ENCODE measurements at regions of chr3 and their contacts with region 1.

Region 1: GRCh38 chr3:188052169-188053030 is 101.6 kb upstream of the LPP start:
- DNase-seq: peak; percentile 89 to 99 (median 94)

Region 2: DNA sequence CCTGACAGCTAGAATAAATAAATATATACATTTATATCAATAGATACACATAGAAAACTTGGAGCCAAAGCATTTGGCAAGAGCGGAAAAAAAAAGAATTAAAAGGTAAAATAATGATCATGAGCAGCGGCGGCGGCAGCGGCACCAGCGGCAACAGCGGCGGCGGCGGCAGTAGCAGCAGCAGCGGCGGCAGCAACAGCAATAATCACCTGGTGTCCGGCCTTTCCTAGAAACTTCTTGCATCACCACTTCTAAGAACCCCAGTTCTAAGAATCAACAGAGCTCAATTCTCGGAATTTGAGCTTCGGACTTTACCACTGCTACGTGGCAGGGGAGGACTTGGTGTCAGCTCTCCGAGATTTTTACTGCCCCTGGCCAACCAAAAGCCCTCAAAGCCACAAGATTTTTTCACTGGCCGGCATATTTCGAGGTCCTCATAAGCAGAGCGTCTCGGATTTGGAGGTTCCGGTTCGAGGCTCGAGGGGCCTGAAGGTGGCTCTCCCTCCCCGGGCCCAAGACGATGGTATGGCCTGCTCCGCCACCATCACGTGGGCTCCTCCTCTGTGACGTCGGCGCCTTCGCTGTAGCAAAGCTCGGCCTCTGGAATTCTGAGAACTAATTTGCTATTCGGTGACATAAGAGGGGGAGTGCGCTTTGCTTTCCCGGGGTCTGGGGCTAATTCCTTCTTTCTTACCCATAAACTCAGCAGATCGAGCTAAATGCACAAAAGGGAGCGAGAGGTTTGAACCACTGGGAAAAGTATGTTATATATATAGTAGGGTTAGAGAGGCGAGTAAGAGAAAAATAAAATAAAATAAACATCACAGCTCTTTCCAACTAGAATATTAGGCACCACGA is 307.0 kb before region 1 on chr3 and contains the start of gene BCL6:
- intact Hi-C with region 1: loop called (anchors 2 kb)
- DNase-seq: peak; percentile 86 to 98 (median 88)

Region 3: DNA sequence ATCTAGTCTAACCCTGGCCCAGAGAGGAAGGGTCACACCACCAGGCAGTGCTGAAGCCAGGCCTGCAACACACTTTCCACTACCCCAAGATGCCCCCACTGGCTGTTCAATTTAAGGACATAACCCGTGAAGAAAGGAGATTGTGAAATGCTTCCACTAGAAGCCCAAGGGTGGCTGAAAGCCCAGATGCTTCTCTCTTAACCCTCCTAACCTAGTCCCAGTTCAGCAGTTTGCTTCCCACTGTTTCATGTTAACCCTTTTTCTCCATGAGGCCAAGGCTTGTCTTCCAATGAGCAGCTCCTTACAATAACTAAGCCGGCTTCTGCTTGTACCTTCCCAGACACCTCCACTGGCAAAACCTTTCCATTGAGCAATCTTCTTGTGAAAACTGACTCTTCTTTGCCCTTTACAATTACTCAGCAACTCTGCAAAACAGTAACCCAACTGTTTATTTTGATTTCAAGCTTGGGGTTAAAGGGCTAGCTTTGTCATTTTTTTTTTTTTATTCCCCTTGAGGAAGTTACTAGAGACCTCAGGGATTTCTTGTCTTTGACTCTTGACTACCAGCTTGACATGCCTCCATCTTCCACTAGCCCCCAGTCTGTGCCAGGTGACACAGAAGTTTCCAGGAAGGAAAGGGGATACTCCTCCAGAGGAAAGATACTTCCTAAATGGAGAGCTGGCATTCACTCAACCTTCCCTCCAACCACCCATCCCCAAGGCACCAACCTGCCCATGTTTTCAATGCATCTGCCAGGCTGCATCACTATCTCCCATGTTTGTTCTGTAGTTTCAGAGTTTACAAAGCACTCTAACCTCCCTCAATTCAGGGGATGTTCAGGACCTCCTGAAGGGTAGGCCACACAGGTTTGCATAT is 97.1 kb before region 1 on chr3:
- intact Hi-C with region 1: no loop called
- DNase-seq: no peak

Region 4: GRCh38 chr3:188154014-188154808 is 101.8 kb after region 1 on chr3 and contains the start of gene LPP:
- intact Hi-C with region 1: loop called (anchors 5 kb)
- DNase-seq: peak; percentile 44 to 93 (median 60)

Region 5: GRCh38 chr3:188270423-188270972 is 218.1 kb after region 1 on chr3:
- intact Hi-C with region 1: loop called (anchors 5 kb)
- DNase-seq: no peak

Region 6: GRCh38 chr3:188947401-188948280 is 895.2 kb after region 1 on chr3:
- intact Hi-C with region 1: loop called (anchors 2 kb)
- DNase-seq: peak; percentile 74 to 97 (median 88)